ENCODE measurements at regions of chr3 and their contacts with region 1.

Region 1: DNA sequence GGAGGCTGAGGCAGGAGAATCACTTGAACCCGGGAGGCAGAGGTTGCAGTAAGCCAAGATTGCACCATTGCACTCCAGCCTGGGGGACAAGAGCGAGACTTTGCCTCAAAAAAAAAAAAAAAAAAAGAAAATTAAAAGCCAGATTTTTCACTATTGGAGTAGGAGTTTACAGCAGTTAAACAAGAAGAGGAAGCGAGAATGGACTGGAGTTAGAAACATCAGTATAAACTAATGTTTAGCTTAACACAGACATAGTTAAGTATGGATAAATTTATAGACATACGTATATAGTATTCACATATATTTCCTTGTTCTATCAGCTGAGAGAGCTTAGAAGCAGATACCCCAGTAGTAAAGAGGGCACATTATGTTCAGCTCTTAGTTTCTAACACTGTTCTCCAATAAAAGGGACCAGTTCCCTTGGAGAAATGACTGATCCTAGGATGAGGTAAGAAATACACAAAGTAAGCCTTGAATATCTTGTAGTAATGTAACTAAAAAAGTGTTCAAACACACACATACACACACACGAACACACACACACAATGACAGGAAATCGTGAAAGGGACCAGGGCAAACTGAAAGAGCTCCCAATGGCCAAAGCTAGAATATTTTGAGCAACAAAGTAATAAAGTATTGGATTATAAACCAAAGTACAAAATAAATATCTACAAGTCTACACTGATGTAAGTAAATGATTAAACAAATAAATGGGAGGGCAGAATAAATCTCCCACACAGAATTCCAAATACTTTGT is 25.1 kb downstream of the PIK3CB start:
- DNase-seq: no peak
- H3K4me3 Mint-ChIP-seq: no peak overlapping the region
- H3K27ac Mint-ChIP-seq: no peak overlapping the region
- H3K4me1 Mint-ChIP-seq: peaks cover 11% of the 10 kb centered on the region
- H3K27me3 Mint-ChIP-seq: no peaks in the 10 kb centered on the region
- CTCF ChIP-seq: no peak

Region 2: DNA sequence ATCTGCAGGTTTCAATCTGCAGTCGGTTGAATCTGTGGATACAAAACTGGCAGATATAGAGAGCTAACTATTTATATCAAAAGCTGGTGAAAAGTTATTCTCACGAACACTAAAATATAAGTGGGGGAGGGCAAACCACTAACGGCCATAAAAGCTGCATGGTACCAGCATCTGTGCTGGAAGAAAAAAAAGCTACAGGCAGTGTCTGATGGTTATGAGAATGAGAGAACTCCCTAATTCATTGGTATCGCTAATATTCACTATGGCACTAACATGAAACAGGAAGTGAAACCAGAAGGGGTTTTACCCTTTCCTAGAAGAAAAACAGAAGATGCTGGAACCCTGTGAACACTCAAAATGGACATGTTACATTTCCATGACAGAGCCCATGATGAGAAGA is 231.5 kb before region 1 on chr3:
- CTCF ChIA-PET with region 1: no interaction called
- intact Hi-C with region 1: no loop called
- DNase-seq: no peak
- H3K4me3 Mint-ChIP-seq: no peak overlapping the region
- H3K27ac Mint-ChIP-seq: no peak overlapping the region
- H3K4me1 Mint-ChIP-seq: peaks cover 11% of the 10 kb centered on the region
- H3K27me3 Mint-ChIP-seq: no peaks in the 10 kb centered on the region
- CTCF ChIP-seq: no peak

Region 3: DNA sequence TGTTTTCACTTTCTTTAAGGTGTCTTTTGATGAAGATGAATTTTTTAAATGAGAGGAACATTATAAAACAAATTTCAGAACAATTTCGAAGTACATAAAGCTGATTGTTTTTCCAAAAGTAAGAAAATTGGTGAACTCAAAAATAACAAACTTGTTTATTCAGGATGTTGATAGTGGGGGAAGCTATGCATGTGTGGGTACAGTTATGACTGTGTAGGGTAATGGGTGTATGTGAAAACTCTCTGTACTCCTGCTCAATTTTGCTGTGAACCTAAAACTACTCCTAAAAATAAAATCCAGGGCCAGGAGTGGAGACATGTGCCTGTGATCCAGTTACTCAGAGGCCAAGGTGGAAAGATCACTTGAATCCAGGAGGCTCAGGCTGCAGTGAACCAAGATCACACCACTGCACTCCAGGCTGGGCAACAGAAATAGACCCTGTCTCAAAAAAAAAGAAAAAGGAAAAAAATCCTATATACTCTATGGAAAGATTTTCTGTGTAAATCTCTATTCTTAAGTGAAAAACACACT is 12.1 kb before region 1 on chr3:
- CTCF ChIA-PET with region 1: interaction called, 3 read pairs
- intact Hi-C with region 1: loop called (anchors 2 kb)
- DNase-seq: no peak
- H3K4me3 Mint-ChIP-seq: no peak overlapping the region
- H3K27ac Mint-ChIP-seq: no peak overlapping the region
- H3K4me1 Mint-ChIP-seq: peaks cover under 1% of the 10 kb centered on the region
- H3K27me3 Mint-ChIP-seq: no peaks in the 10 kb centered on the region
- CTCF ChIP-seq: no peak